Sciatic nerve (tissue), 2 donors: ENCODE measurements at regions of chr3 and their contacts with region 1.

Region 1: GRCh38 chr3:177197041-177197727 is at the start of gene TBL1XR1:
- DNase-seq: peak; percentile 94
- ATAC-seq: peak; percentile 92
- total RNA-seq, gene TBL1XR1: 182 TPM

Region 2: GRCh38 chr3:177150970-177151627 is 46.1 kb before region 1 on chr3:
- intact Hi-C with region 1: no loop called
- DNase-seq: no peak
- ATAC-seq: no peak

Region 3: DNA sequence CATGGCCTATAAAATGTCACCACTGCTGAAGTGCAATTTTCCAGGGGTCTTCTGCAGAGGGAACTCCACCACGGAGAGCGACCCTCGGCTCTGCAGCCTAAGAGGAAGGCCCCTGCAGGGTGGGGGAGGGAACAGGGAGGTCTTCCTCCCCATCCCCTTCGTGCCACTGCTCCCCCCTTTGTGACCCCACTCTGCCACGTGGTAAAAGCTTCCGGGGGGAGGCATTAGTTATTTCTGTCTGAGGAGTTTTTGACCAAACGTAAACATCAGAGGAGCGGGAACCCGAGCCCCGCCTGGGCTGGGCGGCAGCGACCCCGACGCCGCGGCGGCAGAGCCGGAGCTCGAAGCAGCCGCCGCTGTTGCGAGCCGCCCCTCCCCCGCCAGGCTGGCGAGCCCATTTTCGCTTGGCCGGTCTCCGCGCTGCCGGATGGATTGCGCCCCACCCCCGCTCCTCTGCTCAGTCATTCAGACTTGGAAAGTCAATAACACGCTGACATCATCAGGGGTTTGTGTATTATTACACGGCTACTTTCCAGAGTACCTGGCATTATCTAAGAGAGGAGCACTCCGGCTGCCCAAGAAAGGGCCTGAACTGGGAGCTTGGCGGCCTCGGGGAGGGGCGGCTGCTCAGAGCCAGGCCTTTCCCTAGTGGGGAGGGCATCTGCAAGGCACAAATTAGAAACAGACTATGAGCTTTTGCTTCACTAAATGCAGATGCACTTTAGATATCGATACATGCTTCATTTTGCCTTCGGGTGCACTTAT is 162.6 kb after region 1 on chr3:
- intact Hi-C with region 1: loop called (anchors 1 kb)
- DNase-seq: peak; percentile 98
- ATAC-seq: peak; percentile 96